ENCODE measurements at regions of chr5 and their contacts with region 1.

Region 1: GRCh38 chr5:97297063-97297703 is 114.1 kb upstream of the RIOK2 start:
- DNase-seq: peak; percentile 11
- ATAC-seq: peak; percentile 100
- H3K4me3 ChIP-seq: no peak overlapping the region
- H3K27ac ChIP-seq: no peak overlapping the region
- H3K4me1 ChIP-seq: no peaks in the 10 kb centered on the region
- H3K27me3 ChIP-seq: no peaks in the 10 kb centered on the region
- CTCF ChIP-seq: peak; percentile 70 to 81 (median 71)
- EP300 ChIP-seq: no peak
- POLR2A ChIP-seq: no peak
- RAD21 ChIP-seq: peak; percentile 84

Region 2: DNA sequence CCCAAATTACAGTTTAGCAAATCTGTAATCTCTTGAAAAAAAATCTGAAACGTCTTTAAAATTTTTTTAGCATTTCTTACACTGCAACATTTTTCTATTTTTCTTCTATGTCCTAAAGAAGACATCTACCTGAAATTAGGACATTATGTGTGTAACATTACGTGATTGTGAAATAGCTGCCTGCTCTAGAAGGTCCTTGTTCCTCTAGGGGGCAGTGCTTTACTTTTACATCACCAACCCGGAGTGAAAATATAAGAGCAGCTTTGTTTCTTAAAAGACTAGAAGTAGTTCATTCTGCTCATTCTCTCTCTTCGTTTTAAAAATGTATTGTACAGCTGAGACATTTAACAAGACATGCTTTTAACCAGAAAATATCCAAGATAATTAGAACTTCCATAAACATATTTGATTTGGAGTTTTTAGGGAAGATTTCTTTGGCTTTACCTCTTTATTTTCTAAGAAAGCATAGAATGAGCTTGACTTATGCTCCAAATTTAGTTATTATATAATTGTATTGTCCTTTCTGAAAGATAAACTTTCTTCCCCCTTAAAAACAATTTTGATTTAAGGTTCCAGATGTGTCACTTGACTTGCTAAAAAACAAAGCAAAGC is 66.1 kb before region 1 on chr5:
- CTCF ChIA-PET with region 1: interaction called, 19 read pairs
- POLR2A ChIA-PET with region 1: no interaction called
- RAD21 ChIA-PET with region 1: interaction called, 5 read pairs
- SMC1A ChIA-PET with region 1: interaction called, 3 read pairs
- in situ Hi-C with region 1: no loop called
- intact Hi-C with region 1: no loop called
- DNase-seq: peak; percentile 20
- ATAC-seq: peak; percentile 94
- H3K4me3 ChIP-seq: no peak overlapping the region
- H3K27ac ChIP-seq: no peak overlapping the region
- H3K4me1 ChIP-seq: no peaks in the 10 kb centered on the region
- H3K27me3 ChIP-seq: no peaks in the 10 kb centered on the region
- CTCF ChIP-seq: peak; percentile 61 to 76 (median 73)
- EP300 ChIP-seq: no peak
- POLR2A ChIP-seq: no peak
- RAD21 ChIP-seq: peak; percentile 83

Region 3: DNA sequence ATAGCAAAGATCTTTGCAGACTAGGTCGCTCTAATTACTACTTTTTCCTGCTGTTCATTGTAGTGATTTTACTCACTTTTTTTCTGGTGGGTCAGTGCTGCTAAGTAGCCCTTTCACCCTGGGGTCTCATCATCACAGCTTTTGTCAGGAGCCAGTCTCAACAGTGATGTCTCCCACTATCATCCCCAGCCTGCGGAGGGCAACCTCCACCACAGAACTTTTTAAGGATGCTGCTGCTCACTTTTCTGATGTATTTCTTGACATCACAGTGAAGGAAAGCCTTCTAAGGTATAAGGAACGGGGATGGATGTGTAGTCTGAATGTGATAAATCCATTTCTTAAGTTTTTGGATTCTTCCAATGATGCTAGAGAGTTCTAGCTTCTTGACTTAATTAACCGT is 128.3 kb after region 1 on chr5:
- CTCF ChIA-PET with region 1: interaction called, 3 read pairs
- POLR2A ChIA-PET with region 1: no interaction called
- RAD21 ChIA-PET with region 1: no interaction called
- SMC1A ChIA-PET with region 1: interaction called, 5 read pairs
- in situ Hi-C with region 1: no loop called
- intact Hi-C with region 1: loop called (anchors 5 kb)
- DNase-seq: no peak
- ATAC-seq: peak; percentile 47; the same call in 2 of the 3 replicates
- H3K4me3 ChIP-seq: no peak overlapping the region
- H3K27ac ChIP-seq: no peak overlapping the region
- H3K4me1 ChIP-seq: no peaks in the 10 kb centered on the region
- H3K27me3 ChIP-seq: no peaks in the 10 kb centered on the region
- CTCF ChIP-seq: peak; percentile 34 to 51 (median 42)
- EP300 ChIP-seq: no peak
- POLR2A ChIP-seq: no peak
- RAD21 ChIP-seq: peak; percentile 82

Region 4: DNA sequence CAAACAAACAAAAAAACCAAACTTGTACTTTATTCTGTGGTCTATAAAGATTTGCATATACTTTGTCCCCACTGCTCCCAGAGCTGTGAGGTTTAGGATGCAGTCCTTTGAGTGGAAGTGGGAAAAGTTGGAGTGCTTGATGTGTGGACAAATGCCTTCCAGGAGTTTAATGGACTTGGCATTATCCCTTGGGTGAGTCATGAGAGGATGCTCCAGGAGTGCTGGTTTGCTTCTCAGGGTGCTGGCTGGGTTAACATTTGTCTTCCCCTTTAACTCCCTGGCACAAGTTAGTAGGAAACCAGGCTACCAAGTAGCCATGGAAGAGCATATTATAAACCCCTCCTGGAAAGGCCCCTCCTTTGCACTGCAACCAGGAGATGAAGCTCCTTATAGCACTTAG is 303.3 kb after region 1 on chr5:
- CTCF ChIA-PET with region 1: no interaction called
- POLR2A ChIA-PET with region 1: no interaction called
- RAD21 ChIA-PET with region 1: no interaction called
- SMC1A ChIA-PET with region 1: no interaction called
- in situ Hi-C with region 1: no loop called
- intact Hi-C with region 1: no loop called
- DNase-seq: no peak
- ATAC-seq: no peak
- H3K4me3 ChIP-seq: no peak overlapping the region
- H3K27ac ChIP-seq: no peak overlapping the region
- H3K4me1 ChIP-seq: no peaks in the 10 kb centered on the region
- H3K27me3 ChIP-seq: no peaks in the 10 kb centered on the region
- CTCF ChIP-seq: no peak
- EP300 ChIP-seq: no peak
- POLR2A ChIP-seq: no peak
- RAD21 ChIP-seq: no peak

Region 5: DNA sequence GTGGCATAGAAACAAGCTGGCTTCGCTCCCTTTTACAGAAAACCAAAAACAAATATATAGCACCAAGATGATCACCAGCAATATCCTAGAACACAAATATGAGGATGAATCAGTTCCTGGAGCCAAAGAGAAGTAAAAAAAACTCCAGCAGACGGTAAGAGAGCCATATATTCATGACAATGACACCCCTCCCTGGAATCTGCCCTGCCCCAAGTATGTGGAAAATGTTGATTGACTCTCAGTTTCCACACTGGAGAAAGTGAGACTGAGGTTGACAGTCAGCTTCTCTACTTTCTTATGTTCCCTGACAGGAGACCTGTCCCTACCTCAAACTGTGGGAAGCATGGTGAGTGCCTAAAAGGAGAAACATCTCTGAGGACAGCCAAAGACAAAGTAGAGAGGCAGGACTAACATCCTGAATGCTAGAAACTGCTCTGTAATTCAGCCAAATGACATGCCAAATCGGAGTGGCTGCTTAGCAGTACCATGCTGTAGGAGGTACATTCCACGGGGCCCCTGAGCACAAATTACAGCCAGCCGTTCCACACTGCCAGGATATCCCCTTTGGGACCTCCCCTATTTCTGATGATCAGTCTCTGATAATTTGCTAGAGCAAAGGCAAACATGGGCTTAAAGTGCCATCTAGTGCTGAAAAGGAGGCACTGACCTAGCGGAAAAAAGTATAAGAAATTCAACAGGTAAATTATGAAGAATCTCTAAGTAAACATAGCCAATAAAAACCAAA is 1052.2 kb after region 1 on chr5:
- CTCF ChIA-PET with region 1: interaction called, 4 read pairs
- POLR2A ChIA-PET with region 1: no interaction called
- RAD21 ChIA-PET with region 1: no interaction called
- SMC1A ChIA-PET with region 1: interaction called, 5 read pairs
- in situ Hi-C with region 1: no loop called
- intact Hi-C with region 1: loop called (anchors 2 kb)
- DNase-seq: no peak
- ATAC-seq: peak; percentile 24; the same call in 1 of the 3 replicates
- H3K4me3 ChIP-seq: no peak overlapping the region
- H3K27ac ChIP-seq: no peak overlapping the region
- H3K4me1 ChIP-seq: no peaks in the 10 kb centered on the region
- H3K27me3 ChIP-seq: no peaks in the 10 kb centered on the region
- CTCF ChIP-seq: peak; percentile 26 to 50 (median 26); a peak in 5 of 6 replicates
- EP300 ChIP-seq: no peak
- POLR2A ChIP-seq: no peak
- RAD21 ChIP-seq: peak; percentile 59

Region 6: GRCh38 chr5:98773464-98774191 is 1476.4 kb after region 1 on chr5 and contains the start of gene RGMB:
- CTCF ChIA-PET with region 1: interaction called, 16 read pairs
- POLR2A ChIA-PET with region 1: no interaction called
- RAD21 ChIA-PET with region 1: interaction called, 3 read pairs
- SMC1A ChIA-PET with region 1: interaction called, 7 read pairs
- in situ Hi-C with region 1: no loop called
- intact Hi-C with region 1: loop called (anchors 5 kb)
- DNase-seq: peak; percentile 85
- ATAC-seq: peak; percentile 89
- H3K4me3 ChIP-seq: peak within 1 kb of the TSS; percentile 93
- H3K27ac ChIP-seq: peak within 1 kb of the TSS; percentile 62
- H3K4me1 ChIP-seq: peaks cover 17% of the 10 kb centered on the region
- H3K27me3 ChIP-seq: peaks cover 2 to 5% of the 10 kb centered on the region in 2 experiments; a peak in 3 of 4 replicates
- CTCF ChIP-seq: no peak
- EP300 ChIP-seq: no peak
- POLR2A ChIP-seq: peak; percentile 86
- RAD21 ChIP-seq: no peak
- polyA plus RNA-seq, gene RGMB: 1.3 to 2.4 TPM

Region 7: DNA sequence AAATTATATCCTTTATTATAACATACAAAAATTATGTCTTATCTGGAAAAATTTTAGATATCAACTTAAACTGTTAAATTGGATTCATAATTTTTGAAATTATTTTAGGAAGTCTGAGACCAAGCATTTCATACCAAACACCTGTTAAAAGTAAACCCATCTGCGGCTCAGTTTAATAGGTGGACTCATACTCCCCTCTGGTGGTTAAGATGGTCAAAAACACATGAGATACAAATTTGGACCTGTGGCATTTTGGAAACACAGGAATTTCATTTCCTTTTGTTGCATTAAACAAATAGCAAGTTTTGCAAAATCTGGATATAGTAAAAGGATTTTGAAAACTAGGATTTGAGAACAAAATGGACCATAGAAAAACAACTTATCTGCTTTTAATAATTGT is 1530.0 kb after region 1 on chr5:
- CTCF ChIA-PET with region 1: interaction called, 4 read pairs
- POLR2A ChIA-PET with region 1: no interaction called
- RAD21 ChIA-PET with region 1: interaction called, 3 read pairs
- SMC1A ChIA-PET with region 1: no interaction called
- in situ Hi-C with region 1: no loop called
- intact Hi-C with region 1: loop called (anchors 5 kb)
- DNase-seq: no peak
- ATAC-seq: peak; percentile 83
- H3K4me3 ChIP-seq: no peak overlapping the region
- H3K27ac ChIP-seq: no peak overlapping the region
- H3K4me1 ChIP-seq: no peaks in the 10 kb centered on the region
- H3K27me3 ChIP-seq: no peaks in the 10 kb centered on the region
- CTCF ChIP-seq: peak; percentile 46 to 60 (median 47); a peak in 5 of 6 replicates
- EP300 ChIP-seq: no peak
- POLR2A ChIP-seq: no peak
- RAD21 ChIP-seq: peak; percentile 88